ENCODE measurements at regions of chr17 and their contacts with region 1.

Region 1: DNA sequence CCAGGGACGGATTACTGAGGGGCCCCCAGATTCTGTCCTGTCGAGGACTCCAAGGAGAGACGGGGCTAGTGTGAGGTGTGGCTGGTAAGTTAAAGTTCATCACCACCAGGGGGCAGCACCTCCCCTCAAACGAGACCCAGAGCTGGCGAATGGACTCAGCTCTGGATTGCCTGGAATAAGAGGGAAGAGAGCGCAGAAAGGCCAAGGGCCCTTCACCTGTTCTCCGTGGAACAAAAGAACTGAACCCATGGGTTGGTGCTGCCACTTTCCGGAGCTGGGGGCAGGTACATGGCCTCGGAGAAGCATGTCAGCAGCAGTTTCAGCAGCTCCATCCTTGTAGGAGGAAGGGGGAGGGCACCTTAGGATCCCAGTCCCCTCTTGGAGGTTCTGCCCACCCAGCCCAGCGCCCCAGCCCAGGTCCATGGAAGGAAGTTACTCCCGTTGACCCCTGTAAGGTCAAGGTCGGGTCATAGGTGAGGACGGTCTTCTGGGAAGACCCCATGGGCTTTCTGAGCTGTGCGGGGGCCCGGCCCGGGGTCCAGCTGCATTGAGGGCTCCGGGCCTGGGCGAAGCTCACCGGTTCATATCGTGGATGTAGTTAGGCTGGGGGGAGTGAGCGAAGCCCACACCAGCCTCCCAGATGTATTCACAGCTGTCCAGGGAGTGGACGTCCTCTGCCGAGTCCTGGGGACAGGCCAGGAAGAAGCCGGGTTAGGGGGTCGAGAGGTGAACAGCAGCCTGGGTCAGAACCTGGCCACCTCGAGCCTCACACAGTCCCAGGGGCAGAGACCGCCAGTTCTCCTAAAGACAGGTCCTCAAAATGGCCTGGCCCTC is 10.7 kb downstream of the HID1 start:
- DNase-seq: peak; percentile 10
- H3K4me3 ChIP-seq: no peak overlapping the region
- CTCF ChIP-seq: peak; percentile 76

Region 2: GRCh38 chr17:74842599-74843351 is 119.1 kb before region 1 on chr17:
- CTCF ChIA-PET with region 1: interaction called, 11 read pairs
- POLR2A ChIA-PET with region 1: no interaction called
- DNase-seq: no peak
- H3K4me3 ChIP-seq: peak overlapping the region; percentile 42
- CTCF ChIP-seq: peak; percentile 71

Region 3: GRCh38 chr17:74972107-74972972 is 10.5 kb after region 1 on chr17 and contains the start of gene HID1:
- CTCF ChIA-PET with region 1: interaction called, 181 read pairs
- POLR2A ChIA-PET with region 1: interaction called, 3 read pairs
- DNase-seq: no peak
- H3K4me3 ChIP-seq: peak within 1 kb of the TSS; percentile 48
- CTCF ChIP-seq: no peak

Region 4: DNA sequence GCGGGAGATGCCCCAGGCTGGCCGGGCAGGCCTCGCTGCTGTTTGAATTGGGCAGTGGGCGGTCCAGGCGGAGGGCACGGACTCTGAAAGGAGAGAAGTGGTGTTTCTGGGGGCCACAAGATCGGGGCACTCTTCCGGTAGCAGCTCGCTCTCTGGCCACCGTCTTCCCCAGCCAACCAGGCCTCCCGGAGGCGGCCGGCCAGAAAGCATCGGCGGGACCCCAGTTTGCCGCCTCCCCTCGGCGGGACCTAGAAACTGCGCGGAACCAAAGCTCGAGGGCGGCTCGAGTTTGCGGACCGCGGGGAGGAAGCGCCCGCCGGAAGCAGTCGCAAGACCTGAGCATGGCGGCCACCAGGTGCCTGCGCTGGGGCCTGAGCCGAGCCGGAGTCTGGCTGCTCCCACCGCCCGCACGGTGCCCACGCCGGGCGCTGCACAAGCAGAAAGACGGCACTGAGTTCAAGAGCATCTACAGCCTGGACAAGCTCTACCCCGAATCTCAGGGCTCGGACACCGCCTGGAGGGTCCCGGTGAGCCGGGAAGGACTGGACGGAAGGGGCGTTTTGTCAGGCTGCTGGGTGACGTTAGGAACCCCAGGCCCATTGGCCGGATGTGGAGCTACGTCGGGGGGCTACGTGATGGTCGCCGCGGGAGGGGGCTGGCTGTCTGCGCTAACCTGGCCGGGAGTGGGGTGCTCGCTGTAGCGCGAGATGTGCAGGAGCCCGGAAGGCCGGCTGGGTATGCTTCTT is 50.6 kb after region 1 on chr17 and contains the start of gene MRPL58:
- CTCF ChIA-PET with region 1: interaction called, 74 read pairs
- POLR2A ChIA-PET with region 1: interaction called, 8 read pairs
- DNase-seq: no peak
- H3K4me3 ChIP-seq: peak within 1 kb of the TSS; percentile 86
- CTCF ChIP-seq: peak; percentile 70

Region 5: GRCh38 chr17:75059369-75060345 is 97.8 kb after region 1 on chr17:
- CTCF ChIA-PET with region 1: interaction called, 43 read pairs
- POLR2A ChIA-PET with region 1: no interaction called
- DNase-seq: no peak
- H3K4me3 ChIP-seq: no peak overlapping the region
- CTCF ChIP-seq: peak; percentile 53

Region 6: DNA sequence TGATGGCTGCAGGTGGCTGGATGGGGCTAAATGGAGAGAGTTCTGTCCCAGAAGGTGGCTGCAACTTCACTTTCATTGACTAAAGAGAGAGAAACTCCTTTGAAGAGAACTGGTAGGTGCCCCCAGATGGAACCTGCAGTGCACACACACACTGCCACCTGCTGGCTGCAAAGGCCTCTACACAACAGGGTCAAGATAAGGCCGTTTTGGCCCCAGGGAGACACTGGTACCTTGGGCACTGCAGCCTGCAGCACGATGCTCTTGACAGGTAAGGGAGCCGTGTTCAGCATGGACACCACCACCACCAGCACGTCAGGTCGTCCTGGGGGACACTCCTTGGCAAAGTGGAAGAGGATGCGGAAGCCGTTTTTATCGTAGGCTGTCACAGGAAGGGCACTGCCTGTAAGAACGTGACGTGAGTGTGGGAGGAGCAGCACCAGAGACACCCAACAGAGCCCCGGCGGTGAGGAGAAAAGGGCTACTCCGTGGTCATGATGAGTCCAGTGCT is 276.9 kb after region 1 on chr17:
- CTCF ChIA-PET with region 1: interaction called, 27 read pairs
- POLR2A ChIA-PET with region 1: no interaction called
- DNase-seq: no peak
- H3K4me3 ChIP-seq: no peak overlapping the region
- CTCF ChIP-seq: peak; percentile 89

Region 7: DNA sequence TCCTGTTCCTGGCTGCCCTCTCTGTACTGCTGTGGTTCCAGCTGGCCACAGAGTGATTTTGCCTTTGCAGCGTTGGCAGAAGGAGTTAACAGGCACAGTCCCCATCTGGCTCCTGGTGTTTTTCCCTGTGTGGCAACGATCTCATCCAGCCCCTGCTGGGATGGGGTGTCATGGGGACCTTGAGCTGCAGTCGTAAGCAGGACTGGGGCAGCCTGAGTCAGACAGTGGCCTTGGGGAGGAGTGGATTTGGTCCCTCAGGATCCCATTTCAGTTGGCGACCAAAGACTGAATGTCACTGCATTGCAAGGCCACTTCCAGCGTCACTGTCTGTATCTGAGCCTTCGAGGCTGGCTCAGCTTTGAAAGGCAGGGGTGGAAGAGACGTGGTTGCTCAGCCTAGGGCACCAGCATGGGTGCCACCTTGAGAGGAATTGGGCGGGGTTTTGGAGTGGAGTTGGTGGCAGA is 506.4 kb after region 1 on chr17:
- CTCF ChIA-PET with region 1: no interaction called
- POLR2A ChIA-PET with region 1: no interaction called
- DNase-seq: no peak
- H3K4me3 ChIP-seq: no peak overlapping the region
- CTCF ChIP-seq: no peak

Measured in AG04449 (cell line).